Activated CD4-positive, alpha-beta T cell treated with anti-CD3 and anti-CD28 coated beads for 36 hours (primary cell): ENCODE measurements at regions of chr2 and their contacts with region 1.

Region 1: DNA sequence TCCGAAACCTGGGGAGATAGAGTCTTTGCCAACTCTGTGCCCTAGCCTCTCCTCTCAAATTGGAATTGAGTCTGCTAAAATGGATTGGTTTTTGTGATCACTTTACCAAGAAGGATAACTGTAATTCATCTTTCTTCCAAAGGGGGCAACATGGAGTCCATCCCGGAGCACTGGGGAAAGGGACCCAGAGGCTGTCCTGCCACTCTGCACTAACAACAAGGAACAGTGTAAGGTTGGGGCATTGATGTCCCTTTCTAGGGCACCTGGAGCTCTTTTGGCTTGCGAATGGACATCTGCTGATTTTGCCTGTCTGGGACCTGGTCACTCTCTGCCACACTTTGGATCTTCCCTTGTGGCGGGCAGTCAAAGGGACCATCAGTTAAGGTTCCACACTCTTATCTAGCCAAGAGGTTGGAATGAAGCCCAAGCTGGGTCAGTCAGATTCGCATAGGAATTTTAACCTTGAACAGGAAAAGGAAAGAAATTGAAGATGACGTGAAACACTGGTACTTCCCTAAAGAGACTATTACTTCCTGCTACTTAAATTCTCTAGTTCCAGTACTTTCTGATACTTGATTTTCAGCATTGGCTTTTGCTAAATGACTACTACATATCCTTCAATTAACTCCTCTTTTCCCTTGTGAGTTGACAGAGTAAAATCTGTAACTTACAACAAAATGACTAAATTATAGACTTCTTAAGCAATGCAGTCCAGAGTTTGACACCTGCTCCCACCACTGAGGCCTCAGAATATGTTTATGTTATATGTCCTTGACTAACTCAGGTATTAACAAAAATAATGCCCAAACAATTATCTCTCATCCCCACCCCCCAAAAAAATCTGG is 64.7 kb upstream of the KLF7 start:
- DNase-seq: no peak
- ATAC-seq: peak; percentile 54
- H3K4me3 Mint-ChIP-seq: no peak overlapping the region
- H3K27ac Mint-ChIP-seq: peak overlapping the region; percentile 79
- H3K4me1 Mint-ChIP-seq: peaks cover 46% of the 10 kb centered on the region
- H3K27me3 Mint-ChIP-seq: no peaks in the 10 kb centered on the region

Region 2: GRCh38 chr2:207156451-207157161 is 73.9 kb before region 1 on chr2:
- CTCF ChIA-PET with region 1: no interaction called
- POLR2A ChIA-PET with region 1: no interaction called
- intact Hi-C with region 1: loop called in 1 of 2 experiments (anchors 2 kb)
- DNase-seq: peak; percentile 65
- ATAC-seq: peak; percentile 83
- H3K4me3 Mint-ChIP-seq: no peak overlapping the region
- H3K27ac Mint-ChIP-seq: peak overlapping the region; percentile 8
- H3K4me1 Mint-ChIP-seq: peaks cover 79% of the 10 kb centered on the region
- H3K27me3 Mint-ChIP-seq: no peaks in the 10 kb centered on the region

Region 3: DNA sequence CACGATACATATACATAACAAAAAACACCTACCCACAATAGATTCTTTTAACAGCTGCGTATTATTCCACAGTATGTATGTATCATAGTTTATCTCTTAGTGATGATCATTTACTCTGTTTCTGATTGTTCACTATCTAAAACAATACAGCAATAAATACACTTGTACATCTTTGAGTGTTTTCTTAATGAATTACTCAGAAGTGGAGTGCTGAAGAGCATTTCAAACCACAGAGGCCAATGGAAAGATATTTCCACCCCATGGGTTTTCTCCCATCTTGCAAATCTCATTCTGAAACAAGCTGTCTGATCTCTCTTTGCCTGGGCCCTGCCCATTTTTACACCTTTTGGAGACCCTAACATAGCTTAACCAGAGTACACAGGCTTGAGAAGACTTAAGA is 49.0 kb after region 1 on chr2:
- CTCF ChIA-PET with region 1: interaction called, 4 read pairs
- POLR2A ChIA-PET with region 1: no interaction called
- intact Hi-C with region 1: loop called in 1 of 2 experiments (anchors 2 kb)
- DNase-seq: peak; percentile 32
- ATAC-seq: peak; percentile 87
- H3K4me3 Mint-ChIP-seq: no peak overlapping the region
- H3K27ac Mint-ChIP-seq: peak overlapping the region; percentile 63
- H3K4me1 Mint-ChIP-seq: peaks cover 42% of the 10 kb centered on the region
- H3K27me3 Mint-ChIP-seq: no peaks in the 10 kb centered on the region

Region 4: GRCh38 chr2:207288628-207289027 is 58.1 kb after region 1 on chr2:
- CTCF ChIA-PET with region 1: interaction called, 4 read pairs
- POLR2A ChIA-PET with region 1: no interaction called
- intact Hi-C with region 1: loop called (anchors 2 to 5 kb)
- DNase-seq: peak; percentile 63
- ATAC-seq: peak; percentile 40
- H3K4me3 Mint-ChIP-seq: no peak overlapping the region
- H3K27ac Mint-ChIP-seq: no peak overlapping the region
- H3K4me1 Mint-ChIP-seq: peaks cover 75% of the 10 kb centered on the region
- H3K27me3 Mint-ChIP-seq: peaks cover 2% of the 10 kb centered on the region